ENCODE measurements at regions of chr3 and their contacts with region 1.

Region 1: GRCh38 chr3:194315088-194315964 is 35.8 kb downstream of the CPN2 start:
- DNase-seq: peak; percentile 55 to 90 (median 81)
- ATAC-seq: peak; percentile 95
- H3K4me3 ChIP-seq: peak overlapping the region; percentile 65
- H3K4me3 Mint-ChIP-seq: peak overlapping the region; percentile 69 to 92 (median 87)
- H3K27ac ChIP-seq: no peak overlapping the region
- H3K27ac Mint-ChIP-seq: peak overlapping the region in 3 of 9 donors; percentile 19 to 68 (median 27)
- H3K4me1 ChIP-seq: peaks cover 9 to 14% of the 10 kb centered on the region in 2 donors
- H3K4me1 Mint-ChIP-seq: peaks cover 5 to 47% (median 9%) of the 10 kb centered on the region in 7 donors
- H3K27me3 ChIP-seq: peaks cover 0 to 6% of the 10 kb centered on the region in 2 donors
- H3K27me3 Mint-ChIP-seq: peaks cover 0 to 18% (median 16%) of the 10 kb centered on the region in 5 donors

Region 2: GRCh38 chr3:193665370-193665989 is 649.8 kb before region 1 on chr3:
- CTCF ChIA-PET with region 1: interaction called, 72 read pairs
- POLR2A ChIA-PET with region 1: no interaction called
- intact Hi-C with region 1: loop called (anchors 1 kb)
- DNase-seq: peak in 6 of 9 donors; percentile 4 to 43 (median 24)
- ATAC-seq: no peak
- H3K4me3 ChIP-seq: no peak overlapping the region
- H3K4me3 Mint-ChIP-seq: no peak overlapping the region
- H3K27ac ChIP-seq: no peak overlapping the region
- H3K27ac Mint-ChIP-seq: no peak overlapping the region
- H3K4me1 ChIP-seq: no peaks in the 10 kb centered on the region
- H3K4me1 Mint-ChIP-seq: no peaks in the 10 kb centered on the region
- H3K27me3 ChIP-seq: no peaks in the 10 kb centered on the region
- H3K27me3 Mint-ChIP-seq: no peaks in the 10 kb centered on the region

Region 3: DNA sequence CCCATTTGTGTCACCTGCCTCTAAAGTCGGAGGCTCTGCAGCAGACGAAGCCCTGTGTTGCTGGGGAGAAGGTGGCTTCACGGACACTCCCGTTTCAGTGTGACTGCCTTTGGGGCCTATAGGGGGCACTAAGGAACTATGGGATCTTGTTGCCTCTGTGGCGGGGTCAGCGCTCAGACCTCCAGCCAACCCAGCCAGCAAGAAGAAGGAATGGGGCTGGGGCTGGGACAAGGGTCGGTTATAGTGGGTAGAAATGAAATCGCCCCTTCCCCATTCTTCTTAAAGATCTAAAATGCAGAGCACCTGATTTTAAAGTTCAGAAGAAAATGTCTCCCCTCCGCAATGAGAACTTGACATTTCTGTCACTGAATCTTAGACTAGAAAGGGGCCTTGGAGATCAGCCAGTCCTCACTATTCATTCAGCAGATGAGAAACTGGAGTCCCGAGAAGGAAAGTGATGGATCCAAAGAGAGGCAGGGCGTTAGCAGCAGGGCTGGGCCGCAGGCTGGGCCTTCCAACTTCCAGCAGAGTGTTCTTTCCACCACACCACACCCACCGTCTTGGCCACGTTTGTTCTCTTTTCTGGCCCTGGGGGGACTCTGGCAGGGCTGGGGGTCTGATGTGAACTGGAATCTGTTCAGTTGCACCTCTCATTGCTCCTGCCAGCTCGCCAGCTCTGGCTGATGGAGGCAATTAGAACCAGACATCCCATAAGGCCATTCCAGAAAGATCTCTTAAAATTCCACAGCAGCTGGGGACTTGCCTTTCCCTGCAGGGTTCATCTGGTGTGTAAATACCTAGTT is 526.9 kb before region 1 on chr3:
- CTCF ChIA-PET with region 1: interaction called, 5 read pairs
- POLR2A ChIA-PET with region 1: interaction called, 3 read pairs
- intact Hi-C with region 1: loop called in 1 of 2 experiments (anchors 2 kb)
- DNase-seq: no peak
- ATAC-seq: peak; percentile 46
- H3K4me3 ChIP-seq: no peak overlapping the region
- H3K4me3 Mint-ChIP-seq: no peak overlapping the region
- H3K27ac ChIP-seq: no peak overlapping the region
- H3K27ac Mint-ChIP-seq: no peak overlapping the region
- H3K4me1 ChIP-seq: no peaks in the 10 kb centered on the region
- H3K4me1 Mint-ChIP-seq: peaks cover 0 to 9% (median 0%) of the 10 kb centered on the region in 7 donors
- H3K27me3 ChIP-seq: no peaks in the 10 kb centered on the region
- H3K27me3 Mint-ChIP-seq: peaks cover 9 to 51% (median 22%) of the 10 kb centered on the region in 5 donors

Region 4: DNA sequence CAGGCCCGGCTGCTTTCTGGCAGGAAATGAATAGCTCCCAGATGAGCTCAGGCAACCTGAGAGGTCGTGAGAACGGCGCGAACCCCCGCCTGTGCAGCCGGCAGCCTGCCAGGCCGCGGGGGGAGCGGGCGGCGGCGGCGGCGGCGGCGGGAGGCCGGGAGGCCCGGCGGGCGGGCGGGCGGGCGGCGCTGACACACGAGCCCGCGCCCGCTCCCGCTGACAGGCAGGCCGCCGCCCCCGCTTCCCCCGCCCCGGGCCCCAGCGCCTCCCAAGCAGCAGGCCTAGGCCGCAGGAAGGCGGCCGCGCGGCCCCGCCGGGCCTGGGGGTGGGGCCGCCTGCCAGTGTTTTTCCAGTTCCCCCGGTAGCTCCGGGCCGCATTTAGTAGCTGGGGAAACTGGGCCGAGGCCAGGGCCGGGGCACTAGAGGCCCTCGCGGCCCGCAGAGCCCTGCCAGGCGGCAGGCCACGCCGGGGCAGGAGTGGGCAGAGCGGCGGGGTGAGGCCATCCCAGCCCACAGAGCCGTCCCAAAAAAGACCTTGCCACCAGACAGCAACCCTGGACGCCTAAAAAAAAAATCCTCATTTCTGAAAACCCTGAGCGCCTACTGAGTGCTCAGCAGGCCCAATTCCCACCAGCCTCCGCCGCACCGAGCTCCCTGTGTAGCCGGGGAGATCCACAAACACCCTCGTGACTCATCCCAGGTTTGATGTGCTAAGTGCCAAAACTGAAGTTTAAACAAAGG is 173.7 kb before region 1 on chr3:
- CTCF ChIA-PET with region 1: interaction called, 7 read pairs
- POLR2A ChIA-PET with region 1: no interaction called
- intact Hi-C with region 1: loop called (anchors 2 kb)
- DNase-seq: peak in 7 of 9 donors; percentile 36 to 74 (median 46)
- ATAC-seq: peak; percentile 55
- H3K4me3 ChIP-seq: peak overlapping the region; percentile 40
- H3K4me3 Mint-ChIP-seq: peak overlapping the region; percentile 69 to 91 (median 80)
- H3K27ac ChIP-seq: peak overlapping the region; percentile 42
- H3K27ac Mint-ChIP-seq: peak overlapping the region; percentile 14 to 82 (median 60)
- H3K4me1 ChIP-seq: peaks cover 8 to 21% of the 10 kb centered on the region in 2 donors
- H3K4me1 Mint-ChIP-seq: peaks cover 18 to 41% (median 31%) of the 10 kb centered on the region in 7 donors
- H3K27me3 ChIP-seq: peaks cover 0 to 7% of the 10 kb centered on the region in 2 donors
- H3K27me3 Mint-ChIP-seq: peaks cover 0 to 60% (median 20%) of the 10 kb centered on the region in 5 donors